Panc1 (cell line): ENCODE measurements at regions of chr4 and their contacts with region 1.

Region 1: DNA sequence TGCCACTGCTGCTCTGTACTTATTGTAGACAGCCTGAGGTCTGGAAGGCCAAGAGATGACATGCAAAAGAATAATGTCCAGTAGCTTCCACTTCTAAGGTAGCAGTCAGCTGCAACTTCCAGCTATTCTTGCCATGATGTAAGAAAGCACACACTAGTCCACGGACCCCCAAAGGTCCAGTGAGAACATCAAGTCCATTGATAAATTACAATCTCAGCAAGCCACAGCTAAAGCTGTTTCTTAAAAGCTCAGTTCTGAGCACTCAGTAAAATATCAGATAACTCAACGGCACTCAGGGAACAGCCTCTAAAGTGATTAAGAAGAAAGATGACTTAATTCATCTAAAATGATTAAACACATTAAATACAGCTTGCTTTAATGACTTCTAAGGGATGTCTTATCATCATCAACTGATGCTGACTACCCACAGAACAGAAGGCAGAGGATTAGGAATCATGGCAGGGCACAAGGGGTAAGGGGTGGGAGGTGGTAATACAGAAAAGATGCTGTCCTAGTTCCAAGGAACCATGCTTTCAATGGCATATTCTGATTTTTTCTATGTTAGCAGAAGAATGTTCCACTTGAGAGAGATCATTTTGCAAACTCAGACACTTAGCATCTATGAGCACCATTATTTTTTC is 99.1 kb upstream of the CBR4 start:
- DNase-seq: no peak
- ATAC-seq: no peak
- H3K4me3 ChIP-seq: no peak overlapping the region
- H3K27ac ChIP-seq: no peak overlapping the region
- H3K4me1 ChIP-seq: no peaks in the 10 kb centered on the region
- H3K27me3 ChIP-seq: no peaks in the 10 kb centered on the region
- CTCF ChIP-seq: no peak

Region 2: DNA sequence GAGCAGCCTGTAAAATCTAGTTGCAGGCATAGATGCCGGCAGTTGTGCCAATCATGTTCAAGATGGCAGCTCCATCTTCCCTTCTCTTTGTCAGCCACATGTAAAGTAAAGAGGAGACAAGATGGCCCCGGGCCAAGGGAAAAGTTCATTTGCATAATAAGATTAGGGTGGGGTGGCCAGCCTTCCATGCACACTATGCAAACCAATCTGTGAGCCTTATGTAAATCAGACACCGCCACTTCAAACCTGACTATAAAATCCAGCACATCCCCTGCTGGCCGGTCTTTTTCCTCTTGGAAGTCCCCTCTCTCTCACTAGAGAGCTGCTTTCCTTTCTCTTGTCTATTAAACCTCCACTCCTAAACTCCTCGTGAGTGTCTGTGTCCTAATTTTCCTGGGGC is 20.2 kb before region 1 on chr4:
- CTCF ChIA-PET with region 1: no interaction called
- POLR2A ChIA-PET with region 1: interaction called, 14 read pairs
- in situ Hi-C with region 1: no loop called
- intact Hi-C with region 1: no loop called
- DNase-seq: no peak
- ATAC-seq: no peak
- H3K4me3 ChIP-seq: no peak overlapping the region
- H3K27ac ChIP-seq: no peak overlapping the region
- H3K4me1 ChIP-seq: no peaks in the 10 kb centered on the region
- H3K27me3 ChIP-seq: no peaks in the 10 kb centered on the region
- CTCF ChIP-seq: no peak